Naive thymus-derived CD4-positive, alpha-beta T cell (primary cell): ENCODE measurements at regions of chr3 and their contacts with region 1.

Region 1: GRCh38 chr3:98522244-98523090 is at the start of gene CLDND1:
- DNase-seq: peak; percentile 88 to 94 (median 93)
- ATAC-seq: peak; percentile 99
- H3K4me3 ChIP-seq: peak within 1 kb of the TSS; percentile 68
- H3K4me3 Mint-ChIP-seq: peak within 1 kb of the TSS; percentile 83 to 99 (median 92)
- H3K27ac ChIP-seq: peak within 1 kb of the TSS; percentile 90
- H3K27ac Mint-ChIP-seq: peak within 1 kb of the TSS; percentile 67 to 99 (median 96)
- H3K4me1 ChIP-seq: peaks cover 16 to 27% of the 10 kb centered on the region in 2 donors
- H3K4me1 Mint-ChIP-seq: peaks cover 31 to 62% (median 53%) of the 10 kb centered on the region in 7 donors
- H3K27me3 ChIP-seq: no peaks in the 10 kb centered on the region
- H3K27me3 Mint-ChIP-seq: no peaks in the 10 kb centered on the region
- total RNA-seq, gene CLDND1: 100 to 478 (median 132) TPM

Region 2: GRCh38 chr3:97821810-97822775 is 700.4 kb before region 1 on chr3 and contains the start of gene CRYBG3:
- CTCF ChIA-PET with region 1: no interaction called
- POLR2A ChIA-PET with region 1: no interaction called
- intact Hi-C with region 1: loop called in 1 of 2 experiments (anchors 1 kb)
- DNase-seq: peak; percentile 64 to 93 (median 81)
- ATAC-seq: peak; percentile 98
- H3K4me3 ChIP-seq: peak within 1 kb of the TSS; percentile 83
- H3K4me3 Mint-ChIP-seq: peak within 1 kb of the TSS; percentile 93 to 98 (median 95)
- H3K27ac ChIP-seq: peak within 1 kb of the TSS; percentile 52
- H3K27ac Mint-ChIP-seq: peak within 1 kb of the TSS; percentile 76 to 98 (median 87)
- H3K4me1 ChIP-seq: peaks cover 0 to 6% of the 10 kb centered on the region in 2 donors
- H3K4me1 Mint-ChIP-seq: peaks cover 14 to 36% (median 21%) of the 10 kb centered on the region in 7 donors
- H3K27me3 ChIP-seq: peaks cover 0 to 3% of the 10 kb centered on the region in 2 donors
- H3K27me3 Mint-ChIP-seq: peaks cover 4 to 29% (median 26%) of the 10 kb centered on the region in 5 donors
- total RNA-seq, gene CRYBG3: 1.8 to 11.2 (median 5.1) TPM

Region 3: GRCh38 chr3:98504539-98504938 is 17.9 kb before region 1 on chr3:
- CTCF ChIA-PET with region 1: no interaction called
- POLR2A ChIA-PET with region 1: no interaction called
- intact Hi-C with region 1: loop called in 1 of 2 experiments (anchors 2 kb)
- DNase-seq: no peak
- ATAC-seq: no peak
- H3K4me3 ChIP-seq: no peak overlapping the region
- H3K4me3 Mint-ChIP-seq: no peak overlapping the region
- H3K27ac ChIP-seq: no peak overlapping the region
- H3K27ac Mint-ChIP-seq: no peak overlapping the region
- H3K4me1 ChIP-seq: no peaks in the 10 kb centered on the region
- H3K4me1 Mint-ChIP-seq: peaks cover 0 to 17% (median 0%) of the 10 kb centered on the region in 7 donors
- H3K27me3 ChIP-seq: no peaks in the 10 kb centered on the region
- H3K27me3 Mint-ChIP-seq: no peaks in the 10 kb centered on the region

Region 4: DNA sequence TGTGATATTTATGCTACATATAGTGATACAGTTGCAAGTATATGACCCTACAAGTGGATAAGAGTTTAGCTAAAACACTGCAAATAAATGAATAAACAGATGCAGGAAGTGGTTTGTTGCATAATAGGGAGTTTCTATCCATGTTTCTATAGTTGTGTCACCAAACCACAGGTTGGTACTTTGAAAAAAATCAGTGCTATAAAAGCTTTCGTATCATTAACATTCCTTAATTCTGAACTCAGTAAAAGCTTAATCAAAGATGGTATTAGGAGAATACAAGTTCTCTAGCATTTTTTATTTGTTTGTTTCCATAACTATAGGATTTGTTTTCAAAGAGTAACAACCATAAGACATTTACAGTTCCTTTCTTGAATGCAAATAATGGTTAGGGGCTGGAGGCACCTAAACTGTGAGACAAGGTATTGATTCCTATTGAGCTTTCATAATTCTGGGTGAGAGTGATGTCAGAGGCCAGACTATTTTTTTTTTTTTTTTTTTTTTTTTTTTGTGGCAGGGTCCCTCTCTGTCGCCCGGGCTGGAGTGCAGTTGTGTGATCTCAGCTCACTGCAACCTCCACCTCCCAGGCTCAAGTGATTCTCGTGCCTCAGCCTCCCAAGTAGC is 41.3 kb after region 1 on chr3:
- CTCF ChIA-PET with region 1: interaction called, 4 read pairs
- POLR2A ChIA-PET with region 1: interaction called, 10 read pairs
- intact Hi-C with region 1: loop called (anchors 1 kb)
- DNase-seq: peak in 7 of 9 donors; percentile 20 to 60 (median 42)
- ATAC-seq: peak; percentile 79
- H3K4me3 ChIP-seq: no peak overlapping the region
- H3K4me3 Mint-ChIP-seq: peak overlapping the region in 9 of 10 donors; percentile 13 to 84 (median 53)
- H3K27ac ChIP-seq: peak overlapping the region; percentile 42
- H3K27ac Mint-ChIP-seq: peak overlapping the region; percentile 69 to 95 (median 86)
- H3K4me1 ChIP-seq: peaks cover 32 to 66% of the 10 kb centered on the region in 2 donors
- H3K4me1 Mint-ChIP-seq: peaks cover 18 to 79% (median 51%) of the 10 kb centered on the region in 7 donors
- H3K27me3 ChIP-seq: no peaks in the 10 kb centered on the region
- H3K27me3 Mint-ChIP-seq: no peaks in the 10 kb centered on the region

Region 5: GRCh38 chr3:99817437-99818240 is 1295.2 kb after region 1 on chr3 and contains the start of gene CMSS1:
- CTCF ChIA-PET with region 1: no interaction called
- POLR2A ChIA-PET with region 1: no interaction called
- intact Hi-C with region 1: loop called in 1 of 2 experiments (anchors 1 kb)
- DNase-seq: peak; percentile 96 to 98 (median 97)
- ATAC-seq: peak; percentile 94
- H3K4me3 ChIP-seq: peak within 1 kb of the TSS; percentile 80
- H3K4me3 Mint-ChIP-seq: peak within 1 kb of the TSS; percentile 84 to 99 (median 95)
- H3K27ac ChIP-seq: peak within 1 kb of the TSS; percentile 90
- H3K27ac Mint-ChIP-seq: peak within 1 kb of the TSS; percentile 93 to 100 (median 100)
- H3K4me1 ChIP-seq: peaks cover 18 to 22% of the 10 kb centered on the region in 2 donors
- H3K4me1 Mint-ChIP-seq: peaks cover 19 to 62% (median 41%) of the 10 kb centered on the region in 7 donors
- H3K27me3 ChIP-seq: no peaks in the 10 kb centered on the region
- H3K27me3 Mint-ChIP-seq: no peaks in the 10 kb centered on the region
- total RNA-seq, gene CMSS1: 14.9 to 47.7 (median 18.2) TPM